Thyroid gland (tissue), 4 donors: ENCODE measurements at regions of chr7 and their contacts with region 1.

Region 1: DNA sequence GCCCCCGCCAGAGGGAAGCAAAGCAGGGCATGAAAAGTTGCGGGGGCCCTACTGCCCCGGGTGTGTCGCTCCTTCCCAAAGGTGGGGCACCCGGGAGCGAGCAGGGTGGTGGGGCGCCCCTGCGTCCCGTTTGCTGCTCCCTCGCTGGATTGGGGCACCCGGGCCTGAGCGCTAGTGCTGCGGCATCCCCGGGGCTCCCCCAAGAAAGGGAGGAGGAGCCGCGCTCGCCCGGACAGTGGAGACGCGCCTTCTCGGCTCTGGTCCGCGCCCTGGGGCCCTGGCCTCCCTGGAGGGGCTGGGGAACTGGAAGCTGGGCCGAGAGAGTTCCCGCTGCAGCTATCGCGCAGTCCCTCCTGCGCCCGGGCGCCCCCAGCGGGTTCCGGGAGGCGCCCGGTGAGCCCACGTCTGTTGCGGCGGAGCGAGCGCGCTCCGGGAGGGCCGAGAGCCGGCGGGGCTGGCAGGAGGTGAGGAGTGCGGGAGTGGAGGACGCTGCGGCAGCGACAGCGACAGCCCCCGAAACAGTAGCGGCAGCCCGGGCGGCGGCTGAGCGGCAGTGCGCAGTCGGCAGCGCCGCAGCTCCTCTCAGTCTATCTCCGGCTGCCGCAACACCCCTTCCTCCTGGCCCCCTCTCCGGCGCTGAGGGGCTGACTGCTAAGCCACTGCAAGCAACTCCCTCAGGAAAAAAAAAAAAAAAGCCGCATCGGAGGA is 504 bp upstream of the BMPER start:
- DNase-seq: peak; percentile 24 to 30
- H3K4me3 ChIP-seq: peak overlapping the region; percentile 48 to 71 (median 52)
- H3K27ac ChIP-seq: no peak overlapping the region
- H3K4me1 ChIP-seq: peaks cover 0 to 9% of the 10 kb centered on the region in 2 donors
- H3K27me3 ChIP-seq: no peaks in the 10 kb centered on the region
- CTCF ChIP-seq: no peak
- POLR2A ChIP-seq: no peak

Region 2: DNA sequence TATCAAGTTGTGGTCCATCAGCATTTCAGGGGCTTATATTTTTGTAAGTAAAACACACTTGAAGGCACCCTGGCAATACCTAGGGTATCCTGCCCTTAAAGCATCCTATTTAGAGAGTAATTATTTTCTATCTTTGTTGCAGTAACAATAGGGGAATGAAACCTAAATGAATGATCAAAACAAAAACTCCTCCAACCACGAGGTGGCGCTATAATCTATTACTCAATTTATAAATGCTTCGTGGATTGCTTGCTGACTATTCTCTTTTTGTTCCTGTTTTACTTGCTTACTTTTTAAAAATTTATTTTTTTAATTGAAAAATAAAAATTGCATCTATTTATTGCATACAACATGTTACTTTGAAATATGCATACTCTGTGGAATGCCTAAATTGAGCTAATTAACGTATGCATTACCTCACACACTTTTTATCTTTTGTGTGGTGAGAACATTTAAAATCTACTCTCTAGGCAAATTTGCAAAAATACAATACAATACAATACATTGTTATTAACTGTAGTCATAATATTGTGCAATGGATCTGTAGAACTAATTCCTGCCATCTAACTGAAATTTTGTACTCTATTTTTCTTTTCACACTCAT is 147.2 kb before region 1 on chr7:
- intact Hi-C with region 1: loop called (anchors 10 kb)
- DNase-seq: peak in 1 of 2 donors; percentile 13
- H3K4me3 ChIP-seq: no peak overlapping the region
- H3K27ac ChIP-seq: no peak overlapping the region
- H3K4me1 ChIP-seq: peaks cover 0 to 11% of the 10 kb centered on the region in 2 donors
- H3K27me3 ChIP-seq: no peaks in the 10 kb centered on the region
- CTCF ChIP-seq: peak in 5 of 6 experiments; percentile 18 to 62 (median 52)
- POLR2A ChIP-seq: no peak

Region 3: DNA sequence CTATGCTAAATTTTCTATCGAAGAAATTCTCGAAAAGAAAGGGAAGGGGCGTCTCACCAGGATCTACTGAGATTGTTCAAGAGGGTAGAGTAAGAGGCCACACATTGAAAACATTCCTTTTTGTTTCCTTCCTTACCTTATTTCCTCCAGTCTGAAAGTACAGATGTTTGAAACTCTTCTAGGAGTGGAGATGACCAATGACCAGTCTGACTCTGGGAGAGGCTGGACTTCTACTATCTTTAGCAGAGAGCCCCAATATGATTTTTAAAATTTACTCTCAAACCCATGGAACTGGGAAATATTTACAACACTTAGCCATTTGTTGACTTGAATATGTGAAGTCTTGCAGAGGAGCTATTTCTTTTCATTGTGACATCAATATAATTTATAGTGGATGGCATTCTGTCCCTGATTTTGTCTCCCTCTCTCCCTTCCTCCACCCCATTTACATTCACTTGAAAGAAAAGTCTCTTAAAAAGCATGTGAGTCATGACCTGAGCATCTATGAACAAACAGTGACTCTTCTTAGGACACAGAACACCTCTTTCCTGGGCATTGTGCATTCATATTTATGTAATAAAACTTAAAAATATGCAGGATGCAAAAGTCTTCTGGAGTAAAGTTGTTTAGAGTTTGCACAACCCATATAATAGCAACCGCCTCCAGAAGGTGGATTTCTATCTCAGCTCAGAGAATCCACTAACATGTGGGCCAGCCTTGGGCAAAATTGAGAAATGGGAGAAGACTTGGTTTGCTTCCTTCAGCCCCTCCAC is 30.7 kb before region 1 on chr7:
- intact Hi-C with region 1: no loop called
- DNase-seq: no peak
- H3K4me3 ChIP-seq: no peak overlapping the region
- H3K27ac ChIP-seq: no peak overlapping the region
- H3K4me1 ChIP-seq: no peaks in the 10 kb centered on the region
- H3K27me3 ChIP-seq: no peaks in the 10 kb centered on the region
- CTCF ChIP-seq: no peak
- POLR2A ChIP-seq: no peak

Region 4: DNA sequence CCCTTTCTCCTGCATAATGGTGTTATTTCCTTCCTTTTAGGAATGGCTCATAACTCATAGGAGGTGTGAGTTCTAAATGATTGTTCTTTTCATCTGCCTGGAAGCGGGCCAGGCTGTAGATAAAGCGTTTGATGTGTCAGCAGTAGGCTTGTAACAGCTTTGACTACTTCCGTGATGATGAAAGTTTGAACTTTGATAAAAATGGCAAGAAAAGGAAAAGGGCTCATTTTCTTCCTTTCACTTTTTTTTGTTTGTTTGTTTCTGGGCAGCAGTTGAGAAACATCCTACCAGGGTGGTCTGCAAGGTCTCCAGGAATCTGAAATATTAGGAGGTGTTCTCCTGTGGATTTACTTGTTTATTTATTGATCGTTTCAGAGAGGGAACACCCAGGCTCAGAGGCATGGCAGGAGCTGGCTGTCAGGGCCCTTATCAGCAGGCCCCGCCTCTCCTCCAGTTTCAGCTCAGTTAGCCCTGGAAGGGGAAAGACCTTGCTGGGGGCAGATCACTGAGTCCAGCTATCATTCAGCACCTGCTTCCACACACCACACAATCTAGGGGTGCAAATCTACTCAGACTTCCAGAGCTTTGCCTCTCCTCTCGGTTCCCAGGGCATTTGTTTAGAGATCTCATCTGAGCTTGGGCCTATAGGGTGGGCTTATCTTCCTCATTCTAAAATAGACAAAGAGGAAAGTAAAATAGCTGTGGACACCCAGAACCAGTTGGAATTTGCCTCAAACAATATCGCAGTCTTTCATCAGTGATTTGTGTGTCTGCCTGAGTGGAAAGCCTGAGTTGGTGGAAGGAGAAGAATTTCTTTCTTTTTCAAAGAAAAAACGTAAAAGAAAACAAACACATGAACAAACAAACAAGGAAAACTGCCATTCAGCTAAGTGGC is 131.5 kb after region 1 on chr7:
- intact Hi-C with region 1: no loop called
- DNase-seq: no peak
- H3K4me3 ChIP-seq: no peak overlapping the region
- H3K27ac ChIP-seq: no peak overlapping the region
- H3K4me1 ChIP-seq: no peaks in the 10 kb centered on the region
- H3K27me3 ChIP-seq: no peaks in the 10 kb centered on the region
- CTCF ChIP-seq: no peak
- POLR2A ChIP-seq: no peak